Activated CD4-positive, alpha-beta memory T cell treated with anti-CD3 and anti-CD28 coated beads for 36 hours (primary cell): ENCODE measurements at regions of chr5 and their contacts with region 1.

Region 1: DNA sequence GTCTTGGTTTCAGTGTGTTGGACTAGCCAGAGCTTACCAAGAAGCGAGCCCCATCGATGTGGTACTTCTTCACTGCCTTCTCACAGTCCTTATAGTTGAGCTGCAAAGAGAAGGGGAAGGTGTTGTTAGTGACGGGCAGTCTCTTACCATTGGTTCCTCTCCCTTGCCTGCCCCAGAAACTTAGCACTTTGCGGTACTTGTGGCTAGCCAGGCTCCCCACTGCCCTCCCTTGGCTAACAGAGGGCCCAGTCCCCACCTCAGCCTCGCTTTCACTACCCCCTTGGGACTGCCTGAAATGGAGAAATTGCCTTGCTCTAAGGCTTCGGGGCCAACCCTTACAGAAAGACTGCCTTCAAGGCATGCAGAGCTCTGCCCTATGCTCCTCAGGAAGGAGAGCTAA is 4.3 kb downstream of the LCP2 start:
- DNase-seq: peak; percentile 78
- H3K4me3 Mint-ChIP-seq: peak overlapping the region; percentile 99
- H3K27ac Mint-ChIP-seq: peak overlapping the region; percentile 99
- H3K4me1 Mint-ChIP-seq: peaks cover 70% of the 10 kb centered on the region
- H3K27me3 Mint-ChIP-seq: no peaks in the 10 kb centered on the region

Region 2: DNA sequence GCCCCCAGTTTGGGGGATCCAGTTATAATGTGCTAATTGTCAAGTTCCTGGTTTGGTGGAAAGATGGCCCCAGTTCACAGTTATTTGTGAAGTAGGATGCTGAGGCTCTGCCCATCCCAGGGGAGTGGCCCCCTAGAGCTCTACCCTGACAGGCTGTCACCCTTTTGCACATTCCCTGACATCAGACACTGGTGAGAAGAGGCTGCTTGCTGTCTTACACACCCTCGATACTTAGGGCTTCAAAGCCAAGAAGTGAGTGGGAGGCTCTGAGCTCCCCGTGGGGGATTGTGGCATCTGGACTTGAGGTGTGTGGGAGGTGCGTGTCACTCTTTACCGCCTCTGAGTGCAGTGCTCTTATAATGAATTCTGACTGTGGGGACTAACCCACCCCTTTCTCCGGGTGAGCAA is 487.7 kb before region 1 on chr5:
- CTCF ChIA-PET with region 1: no interaction called
- POLR2A ChIA-PET with region 1: no interaction called
- intact Hi-C with region 1: loop called (anchors 10 kb)
- DNase-seq: peak; percentile 83
- H3K4me3 Mint-ChIP-seq: peak overlapping the region; percentile 39
- H3K27ac Mint-ChIP-seq: peak overlapping the region; percentile 87
- H3K4me1 Mint-ChIP-seq: peaks cover 57% of the 10 kb centered on the region
- H3K27me3 Mint-ChIP-seq: no peaks in the 10 kb centered on the region

Region 3: DNA sequence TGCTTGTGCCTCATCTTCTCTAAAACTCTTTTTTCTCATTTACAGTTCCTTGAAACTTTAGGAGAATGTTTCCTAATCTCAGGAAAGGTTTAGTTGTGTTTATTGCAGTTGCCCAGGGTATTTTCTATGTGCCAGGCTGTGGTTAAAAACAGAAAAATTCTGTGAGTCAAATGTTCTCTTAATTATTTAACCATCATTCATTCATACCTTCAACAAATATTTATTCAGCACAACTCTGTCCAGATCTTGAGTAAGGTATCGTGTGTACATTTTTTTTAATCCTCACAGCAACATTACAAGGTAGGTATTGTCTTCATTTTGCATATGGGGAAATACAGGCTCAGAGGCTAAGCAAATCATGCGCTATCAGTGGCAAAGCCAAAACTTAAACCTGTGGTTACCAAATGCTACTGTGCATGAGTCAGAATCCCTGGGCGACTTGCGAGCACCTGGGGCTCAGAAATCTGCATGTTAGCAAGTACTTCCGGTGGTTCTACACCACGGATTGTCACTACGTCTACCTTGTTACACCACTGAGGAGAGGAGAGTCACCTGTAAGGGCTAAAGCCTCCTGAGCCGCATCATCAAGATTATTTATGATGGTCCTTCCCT is 39.3 kb before region 1 on chr5:
- CTCF ChIA-PET with region 1: no interaction called
- POLR2A ChIA-PET with region 1: no interaction called
- intact Hi-C with region 1: loop called (anchors 1 kb)
- DNase-seq: peak; percentile 80
- H3K4me3 Mint-ChIP-seq: no peak overlapping the region
- H3K27ac Mint-ChIP-seq: peak overlapping the region; percentile 73
- H3K4me1 Mint-ChIP-seq: peaks cover 57% of the 10 kb centered on the region
- H3K27me3 Mint-ChIP-seq: no peaks in the 10 kb centered on the region

Region 4: DNA sequence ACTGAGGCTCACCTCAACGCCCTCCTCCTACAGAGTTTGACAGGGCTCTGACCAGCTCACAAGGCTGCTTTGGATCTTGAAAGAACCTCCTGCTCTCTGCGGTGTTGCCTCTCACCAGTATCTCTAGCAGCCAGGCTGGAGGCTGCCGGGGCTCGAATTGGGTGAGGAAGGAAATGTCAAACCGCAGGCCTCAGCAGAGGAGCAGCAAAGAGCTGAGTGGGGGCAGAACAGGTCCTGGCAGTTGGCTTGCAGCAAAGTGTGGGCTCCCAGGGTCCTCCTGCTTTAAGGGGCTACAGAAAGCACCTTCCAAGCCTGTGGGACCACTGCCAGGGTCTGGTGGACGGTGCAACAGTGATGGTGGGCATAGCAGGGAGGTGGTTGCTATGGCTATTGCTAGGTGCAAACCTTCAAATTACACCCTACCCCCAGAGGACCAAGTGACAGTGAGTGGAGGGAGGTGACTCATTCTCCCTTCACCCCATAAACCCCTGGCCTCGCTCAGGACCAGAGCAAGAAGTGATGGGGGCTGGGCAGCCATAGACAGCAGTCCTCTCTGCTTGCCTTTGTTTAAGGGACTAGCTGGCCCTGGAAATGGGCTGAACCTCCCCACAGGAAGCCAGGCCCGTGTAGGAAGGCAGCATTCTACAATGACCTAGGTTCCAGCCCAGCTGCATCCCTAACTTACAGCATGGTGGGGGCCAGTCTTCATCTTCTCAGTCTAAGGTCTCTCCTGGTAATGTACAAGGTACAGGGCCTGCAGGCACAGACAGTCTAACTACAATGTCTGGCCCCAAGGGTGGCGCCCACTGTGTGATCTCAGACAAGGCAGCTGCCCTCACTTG is 14.4 kb before region 1 on chr5:
- CTCF ChIA-PET with region 1: interaction called, 137 read pairs
- POLR2A ChIA-PET with region 1: interaction called, 54 read pairs
- intact Hi-C with region 1: loop called (anchors 1 kb)
- DNase-seq: peak; percentile 93
- H3K4me3 Mint-ChIP-seq: peak overlapping the region; percentile 40
- H3K27ac Mint-ChIP-seq: peak overlapping the region; percentile 95
- H3K4me1 Mint-ChIP-seq: peaks cover 94% of the 10 kb centered on the region
- H3K27me3 Mint-ChIP-seq: no peaks in the 10 kb centered on the region

Region 5: DNA sequence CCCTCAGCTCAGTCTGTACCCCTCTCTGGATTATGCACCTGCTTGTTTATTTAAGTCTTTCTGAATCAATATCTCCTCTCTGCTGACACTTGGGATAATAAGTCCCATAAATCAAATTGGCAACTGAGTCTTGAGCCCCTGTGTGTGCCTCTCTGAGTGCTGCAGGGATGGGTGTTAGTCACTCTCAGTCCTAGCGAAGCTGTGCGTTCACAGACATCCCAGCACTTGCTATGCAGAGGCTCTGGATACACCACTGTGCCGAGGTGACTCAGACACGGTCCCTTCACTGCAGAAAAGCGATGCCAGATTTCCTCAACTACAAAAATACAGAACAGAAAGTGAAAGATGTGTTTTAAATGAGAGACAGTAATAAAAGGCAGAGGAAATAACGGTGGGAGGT is 100.0 kb after region 1 on chr5:
- CTCF ChIA-PET with region 1: no interaction called
- POLR2A ChIA-PET with region 1: no interaction called
- intact Hi-C with region 1: no loop called
- DNase-seq: peak; percentile 65
- H3K4me3 Mint-ChIP-seq: no peak overlapping the region
- H3K27ac Mint-ChIP-seq: no peak overlapping the region
- H3K4me1 Mint-ChIP-seq: peaks cover 20% of the 10 kb centered on the region
- H3K27me3 Mint-ChIP-seq: no peaks in the 10 kb centered on the region

Region 6: GRCh38 chr5:170597109-170597751 is 304.0 kb after region 1 on chr5:
- CTCF ChIA-PET with region 1: interaction called, 3 read pairs
- POLR2A ChIA-PET with region 1: no interaction called
- intact Hi-C with region 1: loop called (anchors 5 kb)
- DNase-seq: peak; percentile 77
- H3K4me3 Mint-ChIP-seq: no peak overlapping the region
- H3K27ac Mint-ChIP-seq: no peak overlapping the region
- H3K4me1 Mint-ChIP-seq: peaks cover 19% of the 10 kb centered on the region
- H3K27me3 Mint-ChIP-seq: peaks cover 57% of the 10 kb centered on the region

Region 7: GRCh38 chr5:170769246-170769645 is 476.0 kb after region 1 on chr5:
- CTCF ChIA-PET with region 1: no interaction called
- POLR2A ChIA-PET with region 1: no interaction called
- intact Hi-C with region 1: no loop called
- DNase-seq: no peak
- H3K4me3 Mint-ChIP-seq: no peak overlapping the region
- H3K27ac Mint-ChIP-seq: no peak overlapping the region
- H3K4me1 Mint-ChIP-seq: no peaks in the 10 kb centered on the region
- H3K27me3 Mint-ChIP-seq: peaks cover 2% of the 10 kb centered on the region

Region 8: DNA sequence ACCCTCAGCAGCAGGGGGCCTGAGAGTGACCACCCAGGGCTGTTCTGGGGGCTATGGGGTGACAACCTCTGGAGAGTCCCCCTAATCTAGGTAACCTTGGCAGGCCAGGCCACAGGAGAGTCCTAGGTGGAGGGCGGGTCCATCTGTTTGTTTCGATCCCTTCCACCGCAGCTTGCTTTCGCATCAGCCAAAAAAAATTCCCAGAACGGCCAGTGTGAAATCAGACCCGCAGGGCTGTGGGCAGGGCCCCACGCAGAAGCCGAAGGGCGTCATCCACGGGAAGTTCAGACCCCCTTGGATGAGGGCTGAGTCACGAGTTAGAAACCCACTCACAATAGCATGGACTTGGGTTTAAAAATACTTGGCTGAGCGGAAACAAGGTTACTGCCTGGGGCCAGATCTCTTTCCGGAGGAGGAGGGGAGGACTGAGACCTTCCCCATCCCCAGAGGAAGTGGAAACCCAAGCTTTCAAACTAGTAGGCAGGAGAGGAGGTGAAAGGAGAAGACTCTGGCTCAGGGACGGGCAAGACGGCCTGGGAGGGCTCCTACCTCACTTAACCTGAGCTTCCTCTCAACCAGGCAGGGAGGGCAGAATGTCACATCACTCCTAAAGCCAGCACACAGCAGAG is 1886.2 kb after region 1 on chr5:
- CTCF ChIA-PET with region 1: no interaction called
- POLR2A ChIA-PET with region 1: interaction called, 3 read pairs
- intact Hi-C with region 1: loop called (anchors 10 kb)
- DNase-seq: peak; percentile 67
- H3K4me3 Mint-ChIP-seq: peak overlapping the region; percentile 73
- H3K27ac Mint-ChIP-seq: peak overlapping the region; percentile 99
- H3K4me1 Mint-ChIP-seq: peaks cover 88% of the 10 kb centered on the region
- H3K27me3 Mint-ChIP-seq: no peaks in the 10 kb centered on the region